ENCODE measurements at regions of chr12 and their contacts with region 1.

Region 1: DNA sequence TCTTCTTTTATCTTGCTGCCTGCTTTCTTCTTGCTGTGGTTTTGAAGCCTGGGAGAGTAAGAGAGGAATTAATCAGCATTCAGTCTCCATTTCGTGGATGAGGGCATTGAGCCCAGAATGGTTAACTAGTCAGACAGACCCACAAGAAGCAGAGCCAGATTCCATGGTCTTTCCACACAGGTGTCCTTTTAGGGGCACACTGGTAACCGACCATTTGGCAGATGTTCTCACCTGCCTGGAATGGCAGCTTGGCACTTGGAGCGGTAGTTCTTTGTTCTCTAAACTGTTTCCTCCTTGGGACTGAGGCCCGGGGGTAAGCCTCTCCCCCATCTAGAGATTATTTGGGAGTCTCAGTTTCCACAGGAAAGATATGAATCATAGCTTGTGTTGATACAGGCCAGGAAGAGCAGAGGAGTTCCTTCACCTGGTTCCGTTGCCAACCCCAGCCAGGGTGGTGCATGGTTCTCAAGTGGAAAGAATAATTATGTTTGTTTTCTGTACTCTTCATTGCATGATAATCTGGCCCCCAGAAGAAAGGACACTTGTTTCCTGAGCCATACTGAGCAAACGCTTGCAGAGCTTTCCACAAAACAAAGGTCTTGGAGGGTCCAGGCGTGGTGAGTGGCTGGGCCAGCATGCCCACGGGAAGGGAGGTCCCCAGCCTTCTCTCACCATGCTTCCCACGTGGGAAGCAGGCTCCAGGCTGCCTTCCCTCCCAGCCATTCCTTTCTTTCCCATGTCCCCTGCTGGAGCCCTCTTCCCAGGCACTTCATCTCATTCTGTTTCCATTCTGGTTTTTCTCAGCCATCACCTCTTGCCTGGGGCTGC is 2.0 kb upstream of the KRT75 start:
- DNase-seq: peak; percentile 94
- ATAC-seq: peak; percentile 42
- H3K4me3 ChIP-seq: no peak overlapping the region
- H3K27ac ChIP-seq: peak overlapping the region; percentile 93
- H3K4me1 ChIP-seq: peaks cover 75% of the 10 kb centered on the region
- H3K27me3 ChIP-seq: no peaks in the 10 kb centered on the region
- CTCF ChIP-seq: no peak

Region 2: DNA sequence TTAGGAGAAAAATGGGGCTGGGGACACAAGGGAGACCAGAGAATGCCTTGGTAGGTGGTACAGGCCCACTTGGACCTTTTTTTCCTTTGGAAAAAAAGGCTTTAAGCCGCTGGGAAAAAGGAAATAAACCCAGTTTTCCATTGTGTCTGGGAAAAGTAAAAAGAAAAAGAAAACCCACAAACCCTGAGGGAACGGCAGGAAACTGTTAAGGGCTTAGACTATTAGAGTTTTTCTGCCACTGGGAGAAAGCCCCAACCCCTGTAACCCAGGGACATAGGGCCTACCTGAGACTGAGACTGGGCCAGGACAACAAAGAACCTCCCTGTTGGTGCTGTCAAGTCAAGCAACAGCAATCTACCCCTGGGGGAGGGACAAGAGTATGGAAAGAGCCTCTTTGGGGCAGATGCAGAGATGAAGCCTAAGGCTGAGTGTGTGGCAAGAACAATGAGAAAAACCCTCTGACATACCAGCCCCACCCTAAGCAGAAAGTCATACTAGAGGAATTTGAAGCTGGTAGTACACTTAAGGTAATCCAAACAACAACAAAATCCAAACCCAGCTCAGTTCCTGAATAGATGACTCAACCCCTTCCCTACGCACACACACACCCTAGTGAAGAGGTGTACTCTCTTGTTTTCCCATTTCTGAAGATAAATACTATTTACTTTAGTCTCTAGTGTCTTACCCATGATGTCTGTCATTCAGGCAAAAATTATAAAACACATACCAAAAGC is 1649.5 kb before region 1 on chr12:
- CTCF ChIA-PET with region 1: no interaction called
- POLR2A ChIA-PET with region 1: interaction called, 12 read pairs
- intact Hi-C with region 1: no loop called
- DNase-seq: peak; percentile 98
- ATAC-seq: peak; percentile 96
- H3K4me3 ChIP-seq: peak overlapping the region; percentile 11; the same call in 1 of the 2 replicates
- H3K27ac ChIP-seq: peak overlapping the region; percentile 97
- H3K4me1 ChIP-seq: peaks cover 41% of the 10 kb centered on the region
- H3K27me3 ChIP-seq: no peaks in the 10 kb centered on the region
- CTCF ChIP-seq: no peak

Measured in PC-3 (cell line).